ENCODE measurements at regions of chr18 and their contacts with region 1.

Region 1: DNA sequence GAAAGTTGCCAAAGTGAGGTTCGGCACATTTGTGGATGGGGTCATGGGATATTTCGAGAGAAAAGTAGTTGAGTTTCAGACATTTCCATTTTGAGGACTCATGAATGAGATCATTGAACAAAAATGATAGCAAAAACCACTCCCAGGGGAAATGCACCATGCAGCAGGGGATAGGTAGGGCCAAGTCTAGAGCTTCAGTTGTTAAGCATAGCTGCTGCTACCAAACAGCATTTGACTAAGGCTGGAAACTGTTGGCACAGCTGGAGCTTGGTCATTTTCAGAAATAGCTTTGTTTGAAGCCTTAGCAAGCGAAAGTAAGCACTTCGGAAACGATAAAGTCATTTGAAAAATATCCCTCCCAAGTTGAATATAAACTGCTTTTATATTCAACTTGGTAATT is 431.8 kb downstream of the SOCS6 start:
- DNase-seq: no peak
- ATAC-seq: no peak
- H3K4me3 ChIP-seq: no peak overlapping the region
- H3K27ac ChIP-seq: no peak overlapping the region
- H3K4me1 ChIP-seq: no peaks in the 10 kb centered on the region
- H3K27me3 ChIP-seq: no peaks in the 10 kb centered on the region
- CTCF ChIP-seq: no peak
- EP300 ChIP-seq: no peak
- POLR2A ChIP-seq: no peak
- RAD21 ChIP-seq: no peak

Region 2: GRCh38 chr18:70709144-70709543 is 11.5 kb before region 1 on chr18:
- CTCF ChIA-PET with region 1: no interaction called
- POLR2A ChIA-PET with region 1: no interaction called
- RAD21 ChIA-PET with region 1: no interaction called
- SMC1A ChIA-PET with region 1: no interaction called
- in situ Hi-C with region 1: no loop called
- intact Hi-C with region 1: no loop called
- DNase-seq: no peak
- ATAC-seq: no peak
- H3K4me3 ChIP-seq: no peak overlapping the region
- H3K27ac ChIP-seq: no peak overlapping the region
- H3K4me1 ChIP-seq: no peaks in the 10 kb centered on the region
- H3K27me3 ChIP-seq: no peaks in the 10 kb centered on the region
- CTCF ChIP-seq: no peak
- EP300 ChIP-seq: no peak
- POLR2A ChIP-seq: no peak
- RAD21 ChIP-seq: no peak

Region 3: DNA sequence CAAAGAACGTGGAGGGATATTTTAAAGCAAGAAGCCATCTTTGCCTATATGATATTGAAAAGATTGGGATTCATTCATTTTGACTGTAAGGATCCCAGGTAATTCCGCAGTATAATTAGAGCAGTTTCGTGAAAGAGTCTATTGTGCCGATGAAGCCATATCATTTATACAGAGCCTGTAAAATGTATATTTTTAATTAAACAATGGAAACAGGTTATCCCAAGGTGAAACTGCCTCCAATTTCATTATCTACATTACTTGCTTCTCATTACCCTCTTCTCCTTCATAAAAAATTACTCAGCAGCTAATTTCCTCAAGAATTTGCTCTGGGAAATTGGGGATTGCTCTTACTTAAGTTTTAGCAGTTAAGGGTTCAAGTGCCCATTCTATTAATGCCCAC is 12.3 kb after region 1 on chr18:
- CTCF ChIA-PET with region 1: no interaction called
- POLR2A ChIA-PET with region 1: no interaction called
- RAD21 ChIA-PET with region 1: no interaction called
- SMC1A ChIA-PET with region 1: no interaction called
- in situ Hi-C with region 1: no loop called
- intact Hi-C with region 1: loop called (anchors 1 kb)
- DNase-seq: no peak
- ATAC-seq: no peak
- H3K4me3 ChIP-seq: no peak overlapping the region
- H3K27ac ChIP-seq: no peak overlapping the region
- H3K4me1 ChIP-seq: no peaks in the 10 kb centered on the region
- H3K27me3 ChIP-seq: no peaks in the 10 kb centered on the region
- CTCF ChIP-seq: no peak
- EP300 ChIP-seq: no peak
- POLR2A ChIP-seq: no peak
- RAD21 ChIP-seq: no peak